ENCODE measurements at regions of chr2 and their contacts with region 1.

Region 1: DNA sequence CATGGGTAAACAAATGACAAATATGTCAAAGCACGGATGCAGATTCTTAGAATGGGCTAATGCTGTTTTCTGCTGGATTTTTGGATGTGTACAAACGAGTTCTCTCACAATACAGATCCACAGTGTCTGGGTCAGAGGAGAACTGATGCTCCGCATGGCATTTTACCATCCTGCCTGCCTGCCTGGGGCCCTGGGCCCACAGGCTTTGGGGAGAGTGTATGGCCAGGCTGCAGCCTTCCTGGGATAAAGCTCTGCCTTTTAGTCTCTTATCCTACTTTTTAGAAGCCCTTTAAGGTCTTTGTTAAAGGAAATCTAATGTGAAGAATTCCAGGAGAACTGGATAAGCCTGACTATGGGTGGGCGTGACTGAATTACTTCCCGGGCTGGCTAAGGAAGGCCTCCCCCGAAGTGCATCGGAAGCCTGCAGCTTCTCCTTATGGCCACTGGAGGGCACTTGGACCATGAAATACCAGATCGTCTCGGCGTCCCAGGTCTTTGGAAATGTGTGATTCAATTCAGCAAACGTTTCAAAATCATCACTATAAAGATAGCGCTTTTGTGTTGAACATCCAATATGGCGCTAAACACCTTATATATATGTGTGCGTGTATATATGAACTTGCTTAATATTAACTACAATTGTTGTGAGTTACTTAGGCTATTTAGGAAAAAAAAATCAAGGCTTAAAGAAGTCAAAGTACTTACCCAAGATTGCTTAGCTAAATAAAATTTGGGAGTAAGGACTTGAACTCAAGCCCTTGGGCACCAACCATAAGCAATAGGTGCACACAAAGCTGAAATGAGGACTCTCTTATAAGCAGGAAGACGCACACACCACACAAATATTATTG is 15.2 kb upstream of the DNPEP start:
- DNase-seq: peak; percentile 42
- H3K4me3 ChIP-seq: no peak overlapping the region
- CTCF ChIP-seq: peak; percentile 85

Region 2: DNA sequence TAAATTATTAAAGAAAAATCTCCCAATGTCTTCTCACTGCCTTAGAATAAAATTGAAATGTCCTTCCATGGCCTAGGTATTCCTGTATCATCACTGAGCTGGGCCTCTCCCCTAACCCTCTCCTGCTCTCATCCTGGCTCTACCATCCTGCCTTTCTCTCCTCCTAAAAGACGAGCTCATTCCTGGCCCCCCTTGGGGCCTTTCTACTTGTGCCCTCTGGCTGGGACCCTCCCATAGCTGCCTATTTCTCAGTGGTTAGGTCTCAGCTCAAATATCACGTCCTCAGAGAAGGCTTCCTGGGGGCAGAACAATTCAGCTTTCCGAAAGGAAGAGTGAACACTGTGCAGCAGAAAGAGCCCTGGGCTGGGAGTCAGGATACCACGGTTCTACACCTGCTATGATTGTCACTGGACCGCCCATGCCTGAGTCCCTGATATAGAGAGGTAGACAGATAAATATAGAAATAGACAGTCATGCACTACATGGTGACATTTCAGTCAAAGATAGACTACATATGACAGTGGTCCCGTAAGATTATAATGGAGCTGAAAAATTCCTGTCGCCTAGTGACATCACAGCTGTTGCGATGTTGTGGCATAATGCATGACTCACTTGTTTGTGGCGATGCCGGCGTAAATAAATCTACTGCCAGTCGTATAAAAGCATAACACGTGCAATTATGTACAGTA is 24.6 kb before region 1 on chr2:
- CTCF ChIA-PET with region 1: no interaction called
- POLR2A ChIA-PET with region 1: no interaction called
- DNase-seq: no peak
- H3K4me3 ChIP-seq: no peak overlapping the region
- CTCF ChIP-seq: no peak

Region 3: DNA sequence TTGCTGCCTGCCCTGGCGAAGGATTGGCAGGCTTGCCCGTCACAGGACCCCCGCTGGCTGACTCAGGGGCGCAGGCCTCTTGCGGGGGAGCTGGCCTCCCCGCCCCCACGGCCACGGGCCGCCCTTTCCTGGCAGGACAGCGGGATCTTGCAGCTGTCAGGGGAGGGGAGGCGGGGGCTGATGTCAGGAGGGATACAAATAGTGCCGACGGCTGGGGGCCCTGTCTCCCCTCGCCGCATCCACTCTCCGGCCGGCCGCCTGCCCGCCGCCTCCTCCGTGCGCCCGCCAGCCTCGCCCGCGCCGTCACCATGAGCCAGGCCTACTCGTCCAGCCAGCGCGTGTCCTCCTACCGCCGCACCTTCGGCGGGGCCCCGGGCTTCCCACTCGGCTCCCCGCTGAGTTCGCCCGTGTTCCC is 15.3 kb after region 1 on chr2 and contains the start of gene DES:
- CTCF ChIA-PET with region 1: interaction called, 18 read pairs
- POLR2A ChIA-PET with region 1: no interaction called
- DNase-seq: no peak
- H3K4me3 ChIP-seq: no peak within 1 kb of the TSS
- CTCF ChIP-seq: no peak

Region 4: GRCh38 chr2:219441451-219442255 is 38.8 kb after region 1 on chr2:
- CTCF ChIA-PET with region 1: interaction called, 50 read pairs
- POLR2A ChIA-PET with region 1: interaction called, 3 read pairs
- DNase-seq: no peak
- H3K4me3 ChIP-seq: peak overlapping the region; percentile 66
- CTCF ChIP-seq: no peak

Region 5: DNA sequence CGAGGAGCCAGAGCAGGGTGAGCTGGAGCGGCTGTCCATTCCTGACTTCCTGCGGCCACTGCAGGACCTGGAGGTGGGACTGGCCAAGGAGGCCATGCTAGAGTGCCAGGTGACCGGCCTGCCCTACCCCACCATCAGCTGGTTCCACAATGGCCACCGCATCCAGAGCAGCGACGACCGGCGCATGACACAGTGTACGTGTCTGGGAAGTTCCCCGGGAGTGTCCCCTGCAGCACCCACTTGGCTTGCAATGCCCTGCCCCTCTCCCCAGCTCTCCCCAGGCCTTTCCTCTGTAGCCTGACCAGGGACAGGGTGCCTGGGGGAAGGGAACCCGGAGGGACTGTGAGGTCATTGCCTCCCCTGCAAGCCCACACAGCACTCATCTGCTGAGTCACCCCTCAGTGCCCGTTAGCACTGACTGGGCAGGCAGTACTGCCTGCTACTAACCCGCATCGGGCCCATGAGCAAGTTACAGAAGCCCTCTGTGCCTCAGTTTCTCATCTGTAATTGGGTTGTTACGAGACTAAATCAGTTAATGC is 66.4 kb after region 1 on chr2:
- CTCF ChIA-PET with region 1: interaction called, 177 read pairs
- POLR2A ChIA-PET with region 1: no interaction called
- DNase-seq: no peak
- H3K4me3 ChIP-seq: no peak overlapping the region
- CTCF ChIP-seq: no peak

Region 6: GRCh38 chr2:219509780-219510511 is 107.1 kb after region 1 on chr2:
- CTCF ChIA-PET with region 1: interaction called, 80 read pairs
- POLR2A ChIA-PET with region 1: no interaction called
- DNase-seq: no peak
- H3K4me3 ChIP-seq: peak overlapping the region; percentile 45
- CTCF ChIP-seq: peak; percentile 88

Region 7: DNA sequence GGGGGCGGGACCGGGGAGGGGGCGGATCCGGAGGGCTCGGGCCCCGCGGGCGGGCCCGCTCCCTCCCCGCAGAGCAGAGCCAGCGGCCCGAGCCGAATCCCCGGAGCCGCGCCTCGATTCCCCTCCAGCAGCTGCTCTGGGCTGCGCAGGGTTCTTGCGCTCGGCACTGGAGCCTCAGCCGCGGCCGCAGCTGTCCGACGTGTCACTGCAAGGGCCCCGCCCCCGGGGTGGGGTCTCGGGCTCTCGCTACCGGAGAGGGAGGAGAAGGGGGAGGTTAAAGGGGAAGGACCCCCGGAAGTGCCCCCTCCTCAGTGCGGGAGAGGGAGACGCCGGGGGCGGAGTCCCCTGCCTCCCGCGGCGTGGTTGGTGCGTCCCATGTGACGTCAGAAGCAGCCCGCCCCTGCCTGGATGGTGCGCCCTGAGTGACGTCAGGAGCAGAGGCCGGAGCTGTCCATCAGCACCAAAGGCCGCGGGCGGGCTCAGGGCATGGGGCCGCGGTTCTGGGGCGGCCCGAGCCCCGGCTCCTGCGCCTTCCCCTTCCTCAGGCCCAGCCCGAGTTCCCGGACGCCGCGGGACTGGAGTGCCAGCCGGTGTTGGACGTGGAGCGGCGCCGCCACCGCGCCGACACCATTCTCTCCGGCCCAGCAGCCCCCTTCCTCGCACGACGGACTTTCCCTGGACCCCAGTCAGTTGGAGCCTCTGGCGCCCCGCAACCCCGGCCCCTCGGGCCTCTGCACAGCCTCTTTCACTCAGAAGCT is 140.9 kb after region 1 on chr2 and contains the starts of genes CHPF and TMEM198:
- CTCF ChIA-PET with region 1: interaction called, 62 read pairs
- POLR2A ChIA-PET with region 1: no interaction called
- DNase-seq: peak; percentile 87
- H3K4me3 ChIP-seq: peak within 1 kb of the TSS; percentile 80
- CTCF ChIP-seq: no peak

Measured in AG04449 (cell line).